Natural killer cell (primary cell): ENCODE measurements at regions of chr12 and their contacts with region 1.

Region 1: DNA sequence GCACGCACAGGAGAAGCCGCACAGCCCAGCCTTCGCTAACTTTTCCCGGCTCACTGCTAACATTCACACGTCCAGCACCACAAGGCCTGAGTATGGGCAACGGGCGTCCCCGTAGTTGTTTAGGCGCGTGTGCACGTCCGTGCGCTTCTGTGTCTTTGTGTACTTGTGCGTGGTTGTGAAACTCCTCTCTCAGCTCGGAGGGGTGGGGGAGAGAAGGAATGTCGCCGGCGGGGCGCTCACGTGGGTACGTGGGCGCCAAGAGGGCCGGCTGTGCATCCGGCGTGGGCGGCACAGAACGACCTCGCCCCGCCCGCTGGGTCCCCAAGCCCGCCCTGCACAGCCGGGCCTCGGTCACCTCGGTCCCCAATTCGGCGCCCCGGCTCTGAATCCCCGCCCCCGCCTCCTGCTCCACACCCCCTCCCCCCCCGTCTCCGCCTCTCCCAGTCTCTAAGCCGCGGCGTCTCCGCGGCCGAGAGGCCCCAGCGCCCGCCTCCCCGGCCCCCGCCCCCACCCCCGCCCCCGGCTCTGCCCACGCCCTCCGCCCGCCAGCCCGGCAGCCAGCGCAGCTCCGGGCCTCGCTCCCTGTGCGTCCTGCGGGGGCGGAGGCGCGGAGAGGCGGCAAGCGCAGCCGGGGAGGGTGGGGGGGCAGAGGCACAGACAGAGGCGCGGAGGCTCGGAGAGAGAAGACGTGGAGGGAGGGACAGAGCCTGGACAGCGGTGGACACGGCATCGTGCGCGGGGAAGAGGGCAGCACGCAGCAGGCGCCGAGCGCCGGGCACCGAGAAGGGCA is at the start of gene NAB2:
- DNase-seq: peak; percentile 84 to 97
- ATAC-seq: peak; percentile 73 to 90 (median 81)
- H3K4me3 ChIP-seq: peak within 1 kb of the TSS; percentile 71
- H3K4me3 Mint-ChIP-seq: peak within 1 kb of the TSS; percentile 90
- H3K27ac ChIP-seq: peak within 1 kb of the TSS; percentile 100
- H3K27ac Mint-ChIP-seq: peak within 1 kb of the TSS; percentile 92 to 95
- H3K4me1 ChIP-seq: peaks cover 46% of the 10 kb centered on the region
- H3K4me1 Mint-ChIP-seq: peaks cover 25 to 42% of the 10 kb centered on the region in 2 donors
- H3K27me3 ChIP-seq: no peaks in the 10 kb centered on the region
- H3K27me3 Mint-ChIP-seq: no peaks in the 10 kb centered on the region
- CTCF ChIP-seq: no peak
- total RNA-seq, gene NAB2: 4.2 to 7.0 (median 5.4) TPM

Region 2: DNA sequence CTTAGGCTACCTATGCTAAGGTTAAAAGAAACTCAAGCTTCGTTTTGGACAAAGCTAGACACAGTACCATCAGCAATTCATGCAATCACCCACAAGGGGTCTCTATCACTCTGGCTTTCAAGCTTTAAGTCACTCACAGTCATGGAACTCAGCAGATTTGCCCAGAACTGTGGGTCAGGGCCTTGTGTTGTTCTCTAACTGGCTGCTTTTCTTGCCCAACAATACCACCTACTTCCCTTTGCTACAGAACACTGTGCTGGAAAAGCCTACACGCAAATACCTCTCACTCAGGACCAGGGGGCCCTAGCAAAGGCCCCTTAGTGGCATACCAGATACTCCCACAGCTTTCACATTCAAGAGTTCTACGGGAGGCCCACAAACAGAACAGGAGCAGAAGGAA is 19.1 kb before region 1 on chr12:
- intact Hi-C with region 1: loop called (anchors 1 kb)
- DNase-seq: peak in 1 of 2 donors; percentile 88
- ATAC-seq: peak; percentile 99 to 100 (median 100)
- H3K4me3 ChIP-seq: no peak overlapping the region
- H3K4me3 Mint-ChIP-seq: no peak overlapping the region
- H3K27ac ChIP-seq: peak overlapping the region; percentile 23
- H3K27ac Mint-ChIP-seq: peak overlapping the region; percentile 66 to 89
- H3K4me1 ChIP-seq: peaks cover 4% of the 10 kb centered on the region
- H3K4me1 Mint-ChIP-seq: peaks cover 8 to 9% of the 10 kb centered on the region in 2 donors
- H3K27me3 ChIP-seq: no peaks in the 10 kb centered on the region
- H3K27me3 Mint-ChIP-seq: no peaks in the 10 kb centered on the region
- CTCF ChIP-seq: peak; percentile 86

Region 3: DNA sequence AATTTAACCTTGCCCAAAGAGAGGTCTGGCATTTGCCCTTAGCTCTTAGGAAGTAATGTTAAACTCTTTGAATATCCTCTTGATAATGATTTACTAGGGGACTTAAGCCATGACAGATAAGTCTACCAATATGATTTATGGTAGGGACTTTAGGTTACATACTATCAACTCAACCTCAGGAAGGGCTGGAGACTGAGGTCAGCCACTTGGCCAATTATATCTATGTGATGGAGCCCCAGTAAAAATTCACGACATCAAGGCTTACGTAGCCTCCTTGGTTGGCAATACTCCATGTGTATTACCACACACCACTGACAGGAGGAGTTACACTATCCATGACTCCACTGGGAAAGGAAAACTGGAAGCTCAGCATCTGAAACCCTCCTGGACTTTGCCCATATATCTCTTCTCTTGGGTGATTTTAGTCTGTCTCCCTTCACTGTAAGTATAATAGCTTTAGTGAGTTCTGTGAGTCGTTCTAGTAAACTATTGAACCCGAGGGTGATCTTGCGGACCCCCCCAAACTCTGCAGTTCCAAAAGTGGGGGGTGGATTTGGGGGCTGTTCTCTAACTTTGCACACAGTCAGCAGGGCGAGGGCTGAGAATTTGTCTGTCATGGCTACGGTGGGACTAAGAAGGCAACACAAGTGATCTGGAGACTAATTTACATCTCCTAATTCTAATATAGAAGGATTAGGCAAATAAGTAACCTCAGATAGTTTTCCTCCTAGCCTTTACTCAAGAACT is 279.9 kb after region 1 on chr12:
- intact Hi-C with region 1: no loop called
- DNase-seq: no peak
- ATAC-seq: no peak
- H3K4me3 ChIP-seq: no peak overlapping the region
- H3K4me3 Mint-ChIP-seq: no peak overlapping the region
- H3K27ac ChIP-seq: no peak overlapping the region
- H3K27ac Mint-ChIP-seq: no peak overlapping the region
- H3K4me1 ChIP-seq: no peaks in the 10 kb centered on the region
- H3K4me1 Mint-ChIP-seq: peaks cover 0 to 10% of the 10 kb centered on the region in 2 donors
- H3K27me3 ChIP-seq: no peaks in the 10 kb centered on the region
- H3K27me3 Mint-ChIP-seq: no peaks in the 10 kb centered on the region
- CTCF ChIP-seq: no peak